ENCODE measurements at regions of chr1 and their contacts with region 1.

Region 1: DNA sequence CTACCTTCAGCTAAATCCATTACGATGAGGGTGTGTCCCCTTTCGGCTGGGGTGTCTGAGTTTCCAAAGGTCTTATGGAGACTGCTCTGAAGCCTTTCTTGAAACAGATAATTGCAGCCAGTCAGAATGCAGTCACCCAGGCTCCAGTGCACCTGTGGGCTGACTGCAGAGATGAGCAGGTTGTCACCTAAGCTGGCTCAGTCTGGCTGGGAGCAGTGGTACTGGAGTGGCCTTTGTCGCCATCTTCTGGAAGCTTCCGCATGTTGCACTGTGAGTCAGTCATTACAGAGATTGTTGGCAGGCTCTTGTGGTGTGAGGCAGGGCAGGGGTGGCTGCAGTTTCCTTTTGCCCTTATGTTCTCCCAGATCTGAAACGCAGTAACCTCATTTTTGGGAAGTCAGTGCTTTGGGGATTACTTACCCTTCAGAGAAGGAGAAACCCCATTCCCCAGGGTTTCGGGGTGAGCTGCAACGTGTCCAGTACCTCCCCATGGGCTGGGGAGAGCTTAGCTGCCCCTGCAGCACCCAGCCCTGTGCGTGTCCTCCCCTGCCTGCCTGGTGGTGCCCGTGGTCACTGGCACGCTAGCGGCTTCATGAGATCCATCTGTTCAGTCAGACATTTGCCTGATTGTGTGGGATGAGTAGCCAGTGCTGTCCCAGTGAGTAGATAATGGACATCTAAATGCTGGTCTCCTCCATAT is 48.0 kb downstream of the SMYD2 start:
- DNase-seq: peak; percentile 86
- ATAC-seq: peak; percentile 92
- H3K4me3 Mint-ChIP-seq: no peak overlapping the region
- H3K27ac Mint-ChIP-seq: no peak overlapping the region
- H3K4me1 Mint-ChIP-seq: peaks cover 9% of the 10 kb centered on the region
- H3K27me3 Mint-ChIP-seq: no peaks in the 10 kb centered on the region

Region 2: GRCh38 chr1:214251354-214251753 is 77.6 kb before region 1 on chr1:
- CTCF ChIA-PET with region 1: interaction called, 373 read pairs
- DNase-seq: no peak
- ATAC-seq: no peak
- H3K4me3 Mint-ChIP-seq: no peak overlapping the region
- H3K27ac Mint-ChIP-seq: no peak overlapping the region
- H3K4me1 Mint-ChIP-seq: no peaks in the 10 kb centered on the region
- H3K27me3 Mint-ChIP-seq: peaks cover 46% of the 10 kb centered on the region

Region 3: DNA sequence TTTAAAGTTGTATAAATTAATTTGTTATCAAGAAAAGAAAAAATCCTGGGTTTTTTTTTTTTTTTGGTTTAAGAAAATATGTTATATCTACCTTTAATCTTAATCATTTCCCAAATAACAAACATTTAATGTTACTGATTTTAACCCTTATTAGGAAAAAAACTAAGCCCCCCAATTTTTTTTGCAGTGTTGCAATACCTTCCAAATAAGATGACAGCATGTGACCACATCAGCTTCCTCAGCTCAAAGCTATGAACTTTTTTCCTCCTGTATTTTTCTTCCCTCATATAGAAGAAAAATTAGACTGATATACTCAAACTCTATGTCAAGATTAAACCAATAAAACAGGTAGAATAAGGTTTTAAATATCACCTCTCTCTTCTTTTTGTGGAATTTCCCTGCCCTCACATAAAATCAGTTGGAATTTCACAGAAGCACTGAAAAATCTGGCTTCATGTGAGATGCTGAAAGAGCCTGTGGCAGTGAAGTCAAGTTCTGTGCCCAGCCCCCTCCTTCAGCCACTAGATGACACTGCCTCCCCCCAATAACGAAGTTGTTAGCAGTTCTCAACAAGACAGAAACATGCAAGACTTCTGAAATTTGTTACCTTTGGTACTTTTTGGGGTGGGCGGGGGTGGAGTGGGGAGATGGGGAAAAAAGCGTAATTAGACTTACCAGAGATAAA is 57.6 kb before region 1 on chr1:
- CTCF ChIA-PET with region 1: interaction called, 30 read pairs
- DNase-seq: no peak
- ATAC-seq: no peak
- H3K4me3 Mint-ChIP-seq: no peak overlapping the region
- H3K27ac Mint-ChIP-seq: no peak overlapping the region
- H3K4me1 Mint-ChIP-seq: peaks cover 7% of the 10 kb centered on the region
- H3K27me3 Mint-ChIP-seq: peaks cover 35% of the 10 kb centered on the region

Region 4: GRCh38 chr1:214306269-214306668 is 22.7 kb before region 1 on chr1:
- CTCF ChIA-PET with region 1: interaction called, 99 read pairs
- DNase-seq: no peak
- ATAC-seq: no peak
- H3K4me3 Mint-ChIP-seq: no peak overlapping the region
- H3K27ac Mint-ChIP-seq: no peak overlapping the region
- H3K4me1 Mint-ChIP-seq: peaks cover 18% of the 10 kb centered on the region
- H3K27me3 Mint-ChIP-seq: no peaks in the 10 kb centered on the region

Region 5: GRCh38 chr1:214354440-214355148 is 25.7 kb after region 1 on chr1:
- CTCF ChIA-PET with region 1: interaction called, 24 read pairs
- DNase-seq: no peak
- ATAC-seq: no peak
- H3K4me3 Mint-ChIP-seq: no peak overlapping the region
- H3K27ac Mint-ChIP-seq: no peak overlapping the region
- H3K4me1 Mint-ChIP-seq: no peaks in the 10 kb centered on the region
- H3K27me3 Mint-ChIP-seq: peaks cover 9% of the 10 kb centered on the region

Region 6: DNA sequence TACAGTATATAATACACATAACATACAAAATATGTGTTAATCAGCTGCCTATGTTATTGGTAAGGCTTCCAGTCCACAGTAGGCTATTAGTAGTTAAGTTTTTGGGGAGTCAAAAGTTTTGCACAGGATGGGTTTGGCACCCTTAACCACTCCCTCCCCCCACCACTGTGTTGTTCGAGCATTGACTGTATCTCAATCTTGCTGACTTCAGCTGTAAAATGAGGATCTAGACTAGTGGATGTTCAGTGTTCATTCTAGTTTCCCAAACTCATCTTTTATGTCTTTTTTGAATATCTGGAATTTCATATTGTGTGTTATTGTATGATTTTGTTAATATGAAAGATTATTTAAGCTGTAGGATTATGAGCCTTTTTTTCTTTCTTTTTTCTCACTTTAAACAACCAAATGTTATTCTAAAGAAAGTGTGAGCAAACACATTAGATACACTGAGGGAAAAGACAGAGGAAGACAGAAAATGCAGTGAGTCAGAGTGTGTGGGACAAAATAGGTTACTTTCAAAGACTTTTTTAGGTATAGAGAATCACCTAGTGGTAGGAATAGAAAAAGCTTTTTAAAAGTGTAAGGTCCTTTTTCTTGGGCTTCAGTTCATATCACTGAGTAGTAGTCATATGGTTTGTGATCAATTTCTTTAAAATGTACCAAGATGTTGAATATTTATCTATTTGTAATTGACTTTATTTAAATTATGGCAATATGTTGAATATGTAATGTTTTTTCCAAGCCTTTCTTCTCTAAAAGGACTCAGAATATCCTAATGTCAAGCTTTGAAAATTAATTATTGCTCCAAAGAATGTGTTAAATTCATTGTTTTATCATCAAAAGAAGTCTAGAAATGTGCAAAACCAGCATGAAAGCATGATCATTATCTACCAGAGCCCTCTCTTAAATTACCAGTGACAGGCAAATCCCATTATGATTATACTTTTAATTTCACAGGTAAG is 256.2 kb after region 1 on chr1:
- CTCF ChIA-PET with region 1: interaction called, 128 read pairs
- DNase-seq: no peak
- ATAC-seq: peak; percentile 60
- H3K4me3 Mint-ChIP-seq: no peak overlapping the region
- H3K27ac Mint-ChIP-seq: no peak overlapping the region
- H3K4me1 Mint-ChIP-seq: no peaks in the 10 kb centered on the region
- H3K27me3 Mint-ChIP-seq: peaks cover 9% of the 10 kb centered on the region

Region 7: GRCh38 chr1:214632091-214632490 is 303.2 kb after region 1 on chr1:
- CTCF ChIA-PET with region 1: interaction called, 25 read pairs
- DNase-seq: peak; percentile 52
- ATAC-seq: no peak
- H3K4me3 Mint-ChIP-seq: no peak overlapping the region
- H3K27ac Mint-ChIP-seq: peak overlapping the region; percentile 59
- H3K4me1 Mint-ChIP-seq: peaks cover 17% of the 10 kb centered on the region
- H3K27me3 Mint-ChIP-seq: no peaks in the 10 kb centered on the region